ENCODE measurements at regions of chr2 and their contacts with region 1.

Region 1: DNA sequence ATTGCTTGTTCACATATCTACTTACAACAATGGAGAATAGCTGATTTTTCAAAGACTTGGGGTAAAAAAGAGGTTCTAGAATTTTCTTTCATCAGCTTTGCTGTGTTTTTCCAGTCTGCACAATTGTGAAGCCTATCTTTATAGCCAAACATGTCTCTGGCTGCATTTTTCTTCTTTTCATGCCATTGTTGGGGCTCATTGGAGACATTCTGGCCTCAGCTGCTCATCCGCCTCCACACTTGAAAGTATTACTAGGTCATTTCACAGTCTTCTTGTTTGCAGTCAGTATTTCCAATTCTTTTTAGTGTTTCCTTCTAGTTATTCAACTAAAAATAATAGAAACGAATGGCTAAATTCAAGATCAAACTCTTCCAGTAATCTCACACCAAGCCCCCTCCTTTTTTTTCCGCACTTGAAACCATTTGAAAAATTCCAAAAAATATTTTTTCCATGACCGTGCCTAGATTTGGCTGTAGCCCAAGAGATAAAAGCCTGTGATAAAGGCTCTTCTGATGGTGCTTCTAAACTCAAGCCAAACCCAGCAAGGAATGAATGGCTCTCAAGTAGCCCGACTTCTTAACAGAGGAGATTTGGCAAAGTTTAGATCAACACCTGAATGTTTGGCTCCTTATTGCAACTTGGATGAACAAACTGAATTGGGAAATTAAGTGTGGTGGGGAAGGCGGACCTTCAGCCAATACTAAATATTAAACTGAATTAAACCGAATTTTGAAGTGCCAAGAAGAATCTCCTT is 103.4 kb downstream of the NRP2 start:
- DNase-seq: no peak
- H3K4me3 ChIP-seq: no peak overlapping the region
- H3K27ac ChIP-seq: peak overlapping the region; percentile 36 to 43
- H3K4me1 ChIP-seq: no peaks in the 10 kb centered on the region
- H3K27me3 ChIP-seq: no peaks in the 10 kb centered on the region
- CTCF ChIP-seq: no peak
- POLR2A ChIP-seq: no peak

Region 2: GRCh38 chr2:204239411-204240165 is 1546.1 kb before region 1 on chr2:
- intact Hi-C with region 1: loop called (anchors 5 kb)
- DNase-seq: no peak
- H3K4me3 ChIP-seq: no peak overlapping the region
- H3K27ac ChIP-seq: no peak overlapping the region
- H3K4me1 ChIP-seq: no peaks in the 10 kb centered on the region
- H3K27me3 ChIP-seq: no peaks in the 10 kb centered on the region
- CTCF ChIP-seq: no peak
- POLR2A ChIP-seq: no peak

Region 3: GRCh38 chr2:207091176-207091575 is 1305.5 kb after region 1 on chr2:
- intact Hi-C with region 1: no loop called
- DNase-seq: no peak
- H3K4me3 ChIP-seq: no peak overlapping the region
- H3K27ac ChIP-seq: no peak overlapping the region
- H3K4me1 ChIP-seq: no peaks in the 10 kb centered on the region
- H3K27me3 ChIP-seq: no peaks in the 10 kb centered on the region
- CTCF ChIP-seq: no peak
- POLR2A ChIP-seq: no peak